Posterior vena cava (tissue), 2 donors: ENCODE measurements at regions of chr3 and their contacts with region 1.

Region 1: GRCh38 chr3:4776980-4777581 is 202.2 kb upstream of the BHLHE40 start:
- DNase-seq: no peak

Region 2: GRCh38 chr3:4826237-4827100 is 49.4 kb after region 1 on chr3:
- intact Hi-C with region 1: loop called in 1 of 2 experiments (anchors 1 kb)
- DNase-seq: peak; percentile 97